ENCODE measurements at regions of chr3 and their contacts with region 1.

Region 1: DNA sequence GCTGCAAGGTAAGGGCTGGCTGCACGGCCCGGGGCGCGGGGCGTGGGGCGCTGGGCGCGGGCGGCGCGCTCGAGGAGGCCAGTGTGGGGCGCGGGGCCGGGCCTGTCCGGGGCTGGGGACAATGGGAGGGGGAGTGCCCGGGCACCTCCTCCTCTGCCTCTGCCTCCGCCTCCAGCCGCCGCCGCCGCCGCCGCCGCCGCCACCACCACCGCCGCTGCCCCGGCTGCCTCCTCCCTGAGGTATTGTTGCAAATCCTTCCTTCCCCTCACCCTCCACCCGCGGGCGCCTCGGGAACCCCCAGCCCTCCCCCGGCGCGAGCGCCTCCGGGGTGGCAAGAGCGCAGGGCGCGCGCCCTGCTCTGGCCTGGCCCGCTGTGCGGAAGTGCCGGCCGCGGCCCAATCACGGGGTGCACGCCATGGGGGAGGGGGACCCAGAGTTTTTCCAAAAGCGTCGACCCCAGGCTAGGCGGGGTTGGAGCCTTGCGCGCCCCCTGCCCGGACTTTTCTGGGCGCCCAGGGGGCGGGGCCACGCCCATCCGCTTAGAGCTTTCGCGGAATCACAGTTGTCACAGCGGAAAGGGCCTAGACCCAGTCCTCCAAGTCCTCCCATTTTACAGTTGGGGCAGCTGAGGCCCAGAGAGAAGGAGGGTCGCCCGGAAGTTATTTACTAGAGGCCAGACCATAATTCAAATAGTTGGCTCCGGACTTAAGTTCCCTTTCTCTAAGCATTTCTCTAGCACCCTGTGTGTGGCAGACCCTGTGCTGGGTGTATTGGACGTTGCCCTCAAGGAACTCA is at the start of gene LPP:
- DNase-seq: peak; percentile 90
- H3K4me3 Mint-ChIP-seq: peak within 1 kb of the TSS; percentile 89
- H3K27ac Mint-ChIP-seq: peak within 1 kb of the TSS; percentile 87
- H3K4me1 Mint-ChIP-seq: peaks cover 71% of the 10 kb centered on the region
- H3K27me3 Mint-ChIP-seq: no peaks in the 10 kb centered on the region
- total RNA-seq, gene LPP: 38.2 and 46.4 TPM in 2 replicates

Region 2: GRCh38 chr3:188000361-188000861 is 153.8 kb before region 1 on chr3:
- intact Hi-C with region 1: loop called (anchors 2 kb)
- DNase-seq: no peak
- H3K4me3 Mint-ChIP-seq: peak overlapping the region; percentile 71
- H3K27ac Mint-ChIP-seq: peak overlapping the region; percentile 93
- H3K4me1 Mint-ChIP-seq: peaks cover 84% of the 10 kb centered on the region
- H3K27me3 Mint-ChIP-seq: no peaks in the 10 kb centered on the region

Region 3: DNA sequence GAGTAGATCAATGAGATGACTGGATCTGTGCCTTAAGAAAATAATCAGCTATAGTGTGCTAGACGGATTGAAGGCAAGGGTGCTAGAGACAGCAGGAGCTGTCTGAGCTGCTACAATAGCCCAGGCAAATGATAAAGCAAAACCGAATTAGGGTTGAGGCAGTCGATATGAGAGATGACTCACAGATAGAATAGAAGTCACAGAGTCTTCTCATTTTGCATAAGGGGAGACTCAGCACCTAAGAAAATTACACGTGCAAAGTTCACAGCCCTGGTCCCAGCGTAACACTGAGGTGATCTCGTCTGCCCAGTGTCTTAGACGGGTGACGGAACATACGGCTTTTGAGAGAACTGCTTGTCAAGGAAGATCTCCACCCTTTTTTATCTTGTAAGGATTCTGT is 11.4 kb after region 1 on chr3:
- intact Hi-C with region 1: loop called (anchors 1 kb)
- DNase-seq: no peak
- H3K4me3 Mint-ChIP-seq: peak overlapping the region; percentile 13
- H3K27ac Mint-ChIP-seq: peak overlapping the region; percentile 30
- H3K4me1 Mint-ChIP-seq: peaks cover 61% of the 10 kb centered on the region
- H3K27me3 Mint-ChIP-seq: no peaks in the 10 kb centered on the region

Region 4: DNA sequence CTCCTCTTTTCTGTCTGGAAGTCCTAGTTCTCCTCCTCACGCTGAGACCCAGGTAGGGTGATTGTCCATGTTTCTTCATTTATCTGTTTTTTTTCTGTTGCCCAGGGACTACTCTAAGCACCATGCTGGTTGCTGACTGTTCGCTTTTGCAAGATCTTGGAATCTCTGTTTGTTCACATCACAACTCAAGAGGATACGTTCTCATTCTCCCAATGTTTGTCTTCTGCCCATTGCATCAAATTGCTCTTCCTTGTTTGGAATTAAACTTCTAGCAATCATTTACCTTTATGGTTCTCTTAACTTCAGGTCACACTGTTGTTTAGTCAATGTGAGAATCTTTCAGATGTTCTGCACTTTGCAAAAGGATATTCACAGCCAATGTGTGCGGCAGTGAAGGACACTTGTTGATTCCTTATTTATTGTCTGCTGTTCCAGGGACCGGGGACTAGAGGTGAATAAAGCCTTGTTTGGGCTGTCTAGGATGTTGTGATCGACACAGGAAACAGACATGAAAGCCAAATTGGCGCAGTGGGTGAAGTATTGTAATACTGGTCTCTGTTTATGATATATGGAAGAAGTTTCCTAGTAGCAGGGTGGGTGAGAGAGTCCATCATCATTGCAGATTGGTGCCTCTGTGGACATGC is 24.2 kb after region 1 on chr3:
- intact Hi-C with region 1: no loop called
- DNase-seq: no peak
- H3K4me3 Mint-ChIP-seq: no peak overlapping the region
- H3K27ac Mint-ChIP-seq: peak overlapping the region; percentile 75
- H3K4me1 Mint-ChIP-seq: peaks cover 58% of the 10 kb centered on the region
- H3K27me3 Mint-ChIP-seq: no peaks in the 10 kb centered on the region

Region 5: DNA sequence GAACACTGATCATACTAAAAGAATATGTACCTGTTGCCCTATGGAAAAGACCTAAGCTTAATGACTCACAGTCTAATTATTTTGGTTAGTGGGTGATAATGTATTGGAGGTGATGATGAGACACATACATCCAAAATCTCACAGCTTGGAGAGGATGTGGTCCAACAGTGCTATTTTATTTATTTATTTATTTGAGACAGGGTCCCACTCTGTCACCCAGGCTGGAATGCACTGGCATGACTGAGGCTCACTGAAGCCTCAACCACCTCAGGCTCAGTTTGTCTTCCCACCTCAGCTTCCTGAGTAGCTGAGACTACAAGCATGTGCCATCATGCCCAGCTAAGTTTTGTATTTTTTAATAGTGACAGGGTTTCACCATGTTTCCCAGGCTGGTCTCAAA is 34.7 kb after region 1 on chr3:
- intact Hi-C with region 1: loop called (anchors 1 kb)
- DNase-seq: no peak
- H3K4me3 Mint-ChIP-seq: no peak overlapping the region
- H3K27ac Mint-ChIP-seq: peak overlapping the region; percentile 30
- H3K4me1 Mint-ChIP-seq: peaks cover 53% of the 10 kb centered on the region
- H3K27me3 Mint-ChIP-seq: no peaks in the 10 kb centered on the region

Region 6: DNA sequence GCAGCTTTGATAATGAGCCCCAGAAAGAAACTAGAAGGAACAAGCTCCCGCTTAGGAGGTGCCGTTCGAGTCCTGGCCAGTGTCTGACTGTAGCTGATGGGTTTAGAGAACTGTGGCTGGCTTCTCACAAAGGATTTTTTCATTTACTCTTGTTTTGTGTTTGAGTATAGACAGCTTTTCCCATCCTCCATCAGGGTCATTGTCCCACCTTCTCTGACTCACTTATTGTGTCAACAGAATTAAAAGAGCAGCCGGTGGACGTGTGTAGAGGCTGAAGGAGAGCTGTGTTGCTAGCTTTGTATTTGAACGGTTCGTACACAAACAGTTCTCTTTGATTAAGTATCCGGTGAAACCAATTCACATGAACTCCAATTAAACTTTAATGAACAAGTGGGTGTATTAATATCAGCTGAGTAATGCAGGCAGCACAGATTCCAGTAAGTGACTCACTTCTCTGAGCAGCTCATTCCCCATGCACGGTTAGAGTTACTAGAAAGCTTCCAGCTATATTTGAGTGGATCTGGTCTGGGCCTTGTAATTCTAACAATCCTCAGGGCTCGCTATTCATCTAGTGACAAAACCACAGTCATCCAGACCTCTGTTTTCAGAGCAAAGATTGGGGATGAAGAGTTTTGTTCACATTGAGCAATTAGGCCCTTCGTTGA is 140.7 kb after region 1 on chr3:
- intact Hi-C with region 1: loop called (anchors 1 kb)
- DNase-seq: no peak
- H3K4me3 Mint-ChIP-seq: no peak overlapping the region
- H3K27ac Mint-ChIP-seq: peak overlapping the region; percentile 33
- H3K4me1 Mint-ChIP-seq: peaks cover 86% of the 10 kb centered on the region
- H3K27me3 Mint-ChIP-seq: no peaks in the 10 kb centered on the region

Region 7: DNA sequence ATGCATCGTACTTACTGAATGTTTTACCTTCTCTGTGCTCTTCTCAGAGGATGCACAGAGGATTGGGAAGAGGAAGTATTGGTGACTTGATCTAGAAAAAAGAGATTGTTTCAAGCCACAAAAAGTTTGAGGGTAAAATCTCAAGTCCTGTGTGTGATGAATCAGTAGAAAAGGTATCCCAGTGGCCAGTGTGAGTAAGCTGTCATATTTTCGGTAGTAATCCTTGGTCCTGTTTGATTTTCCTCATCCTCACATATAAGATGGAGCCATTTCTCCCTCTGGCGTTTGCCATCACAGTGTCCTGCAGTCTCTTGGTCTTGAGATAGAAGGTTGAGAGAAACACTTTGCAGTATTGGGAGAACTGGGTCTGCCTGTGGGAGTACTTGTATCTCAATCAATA is 166.5 kb after region 1 on chr3:
- intact Hi-C with region 1: loop called (anchors 5 kb)
- DNase-seq: no peak
- H3K4me3 Mint-ChIP-seq: no peak overlapping the region
- H3K27ac Mint-ChIP-seq: no peak overlapping the region
- H3K4me1 Mint-ChIP-seq: peaks cover 49% of the 10 kb centered on the region
- H3K27me3 Mint-ChIP-seq: peaks cover 1% of the 10 kb centered on the region

Region 8: DNA sequence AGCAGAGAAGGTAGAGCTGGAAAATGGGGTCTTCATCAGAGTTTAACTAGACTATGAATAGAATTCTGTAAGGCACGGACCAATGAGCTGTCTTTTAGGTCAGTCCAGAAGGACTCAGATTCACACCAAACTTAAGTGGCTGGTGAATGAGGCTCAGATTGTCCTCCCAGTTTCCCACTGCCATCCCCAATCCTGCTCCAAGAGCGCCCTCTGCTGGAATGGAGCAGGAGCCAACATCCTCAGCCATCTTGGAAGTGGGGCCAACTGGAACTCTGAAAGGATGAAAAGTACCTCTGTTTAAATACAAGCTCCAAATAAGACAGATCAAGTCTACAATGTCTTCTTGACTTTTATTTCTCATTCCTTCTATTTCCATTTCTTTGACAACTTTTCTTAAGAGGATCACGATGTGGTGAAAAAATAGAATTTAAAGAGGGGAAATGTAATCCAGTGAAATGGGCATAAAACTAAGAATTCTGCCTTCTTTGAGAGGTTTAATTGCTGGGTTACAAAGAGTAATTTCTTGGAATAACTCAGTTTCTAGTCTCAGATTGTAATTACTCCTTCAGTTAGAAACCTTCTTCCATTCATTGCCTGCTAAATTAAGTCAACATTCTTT is 800.5 kb after region 1 on chr3:
- intact Hi-C with region 1: loop called (anchors 5 kb)
- DNase-seq: peak; percentile 68
- H3K4me3 Mint-ChIP-seq: no peak overlapping the region
- H3K27ac Mint-ChIP-seq: no peak overlapping the region
- H3K4me1 Mint-ChIP-seq: peaks cover 46% of the 10 kb centered on the region
- H3K27me3 Mint-ChIP-seq: no peaks in the 10 kb centered on the region

Measured in activated T-helper 1 cell treated with anti-CD3 and anti-CD28 coated beads, Interleukin-12 subunit alpha, Interleukin-12 subunit beta, Interleukin-2, Interleukin-4 antibody, amounts not matched to agents 30 ng/mL and 10 ng/mL and 1 ng/mL, durations not matched to agents 14 hours and 24 hours and 36 hours (primary cell).